ENCODE measurements at regions of chr20 and their contacts with region 1.

Region 1: GRCh38 chr20:47317127-47317895 is 39.2 kb downstream of the ZMYND8 start:
- DNase-seq: peak; percentile 73 to 89
- ATAC-seq: peak; percentile 56 to 86 (median 80)
- H3K4me3 ChIP-seq: peak overlapping the region in 1 of 10 donors; percentile 30
- H3K27ac ChIP-seq: peak overlapping the region; percentile 94 to 99 (median 98)
- H3K4me1 ChIP-seq: peaks cover 34 to 88% (median 75%) of the 10 kb centered on the region in 9 donors
- H3K27me3 ChIP-seq: no peaks in the 10 kb centered on the region
- CTCF ChIP-seq: no peak

Region 2: DNA sequence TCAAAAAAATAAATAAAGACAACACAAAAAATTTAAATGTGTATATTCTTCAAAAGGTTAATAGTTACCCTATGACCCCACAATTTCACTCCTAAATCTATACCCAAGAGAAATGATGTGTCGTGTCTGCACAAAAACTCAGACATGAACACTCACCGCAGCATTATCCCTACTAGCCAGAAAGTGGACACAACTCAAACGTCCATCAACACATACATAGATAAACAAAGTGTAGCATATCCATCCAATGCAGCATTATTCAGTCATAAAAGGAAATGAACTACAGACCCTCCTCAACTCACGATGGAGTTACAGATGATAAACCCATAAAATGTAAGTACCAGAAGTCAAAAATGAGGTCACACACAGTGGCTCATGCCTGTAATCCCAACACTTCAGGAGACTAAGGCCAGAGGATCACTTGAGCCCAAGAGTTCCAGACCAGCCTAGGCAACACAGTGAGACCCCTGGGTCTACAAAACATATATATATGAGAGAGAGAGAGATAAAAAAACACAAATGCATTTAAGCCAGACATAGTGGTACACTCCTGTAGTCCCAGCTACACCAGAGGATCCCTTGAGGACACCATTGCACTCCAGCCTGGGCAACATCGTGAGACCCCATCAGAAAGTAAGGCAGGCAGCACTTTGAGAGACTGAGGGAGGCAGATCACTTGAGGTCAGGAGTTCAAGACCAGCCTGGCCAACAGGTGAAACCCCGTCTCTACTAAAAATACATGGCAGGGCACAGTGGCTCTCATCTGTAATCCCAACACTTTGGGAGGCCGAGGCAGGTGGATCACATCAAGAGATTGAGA is 15.6 kb after region 1 on chr20:
- intact Hi-C with region 1: loop called in 1 of 10 experiments (anchors 2 kb)
- DNase-seq: no peak
- ATAC-seq: no peak
- H3K4me3 ChIP-seq: no peak overlapping the region
- H3K27ac ChIP-seq: peak overlapping the region in 7 of 10 donors; percentile 47 to 85 (median 68)
- H3K4me1 ChIP-seq: peaks cover 2 to 95% (median 75%) of the 10 kb centered on the region in 9 donors
- H3K27me3 ChIP-seq: no peaks in the 10 kb centered on the region
- CTCF ChIP-seq: no peak

Region 3: GRCh38 chr20:47356526-47357295 is 39.4 kb after region 1 on chr20 and contains the start of gene ZMYND8:
- intact Hi-C with region 1: loop called in 8 of 10 experiments (anchors 1 to 5 kb)
- DNase-seq: peak; percentile 86 to 89
- ATAC-seq: peak; percentile 45 to 73 (median 64)
- H3K4me3 ChIP-seq: peak within 1 kb of the TSS in 6 of 10 donors; percentile 7 to 39 (median 16)
- H3K27ac ChIP-seq: peak within 1 kb of the TSS; percentile 97 to 99 (median 98)
- H3K4me1 ChIP-seq: peaks cover 69 to 100% (median 100%) of the 10 kb centered on the region in 9 donors
- H3K27me3 ChIP-seq: no peaks in the 10 kb centered on the region
- CTCF ChIP-seq: no peak
- total RNA-seq, gene ZMYND8: 22.0 to 39.0 (median 29.0) TPM

Region 4: GRCh38 chr20:47411161-47411560 is 93.8 kb after region 1 on chr20:
- intact Hi-C with region 1: no loop called
- DNase-seq: peak in 1 of 2 donors; percentile 27
- ATAC-seq: peak; percentile 30 to 90 (median 76)
- H3K4me3 ChIP-seq: peak overlapping the region in 1 of 10 donors; percentile 6
- H3K27ac ChIP-seq: peak overlapping the region; percentile 36 to 77 (median 61)
- H3K4me1 ChIP-seq: peaks cover 6 to 46% (median 33%) of the 10 kb centered on the region in 9 donors
- H3K27me3 ChIP-seq: no peaks in the 10 kb centered on the region
- CTCF ChIP-seq: no peak